ENCODE measurements at regions of chr1 and their contacts with region 1.

Region 1: GRCh38 chr1:111203681-111204200 is 3.3 kb upstream of the DENND2D start:
- DNase-seq: peak; percentile 80
- ATAC-seq: peak; percentile 59
- H3K4me3 Mint-ChIP-seq: peak overlapping the region; percentile 89
- H3K27ac Mint-ChIP-seq: peak overlapping the region; percentile 93
- H3K4me1 Mint-ChIP-seq: peaks cover 85% of the 10 kb centered on the region
- H3K27me3 Mint-ChIP-seq: no peaks in the 10 kb centered on the region
- CTCF ChIP-seq: no peak

Region 2: DNA sequence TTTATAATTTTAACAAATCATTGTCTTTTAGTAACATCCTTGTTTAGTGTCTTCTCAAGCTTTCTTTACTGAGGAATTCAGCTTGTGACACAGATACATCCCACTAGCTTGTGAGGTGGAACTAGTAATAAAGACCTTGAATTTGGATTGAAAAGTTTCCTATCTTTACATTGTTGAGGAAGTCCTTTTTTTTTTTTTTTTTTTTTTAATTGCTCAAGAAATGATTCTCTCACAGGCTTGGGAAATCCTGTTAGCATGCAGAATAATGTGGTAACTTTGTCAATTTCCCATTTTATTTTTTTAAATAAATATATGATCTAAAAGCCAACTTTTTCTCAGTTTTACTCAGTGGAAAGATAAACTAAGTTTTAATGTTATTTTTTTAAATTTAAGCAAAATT is 19.1 kb before region 1 on chr1:
- CTCF ChIA-PET with region 1: no interaction called
- POLR2A ChIA-PET with region 1: interaction called, 6 read pairs
- intact Hi-C with region 1: loop called (anchors 2 kb)
- DNase-seq: no peak
- ATAC-seq: no peak
- H3K4me3 Mint-ChIP-seq: no peak overlapping the region
- H3K27ac Mint-ChIP-seq: no peak overlapping the region
- H3K4me1 Mint-ChIP-seq: peaks cover 43% of the 10 kb centered on the region
- H3K27me3 Mint-ChIP-seq: no peaks in the 10 kb centered on the region
- CTCF ChIP-seq: no peak

Region 3: DNA sequence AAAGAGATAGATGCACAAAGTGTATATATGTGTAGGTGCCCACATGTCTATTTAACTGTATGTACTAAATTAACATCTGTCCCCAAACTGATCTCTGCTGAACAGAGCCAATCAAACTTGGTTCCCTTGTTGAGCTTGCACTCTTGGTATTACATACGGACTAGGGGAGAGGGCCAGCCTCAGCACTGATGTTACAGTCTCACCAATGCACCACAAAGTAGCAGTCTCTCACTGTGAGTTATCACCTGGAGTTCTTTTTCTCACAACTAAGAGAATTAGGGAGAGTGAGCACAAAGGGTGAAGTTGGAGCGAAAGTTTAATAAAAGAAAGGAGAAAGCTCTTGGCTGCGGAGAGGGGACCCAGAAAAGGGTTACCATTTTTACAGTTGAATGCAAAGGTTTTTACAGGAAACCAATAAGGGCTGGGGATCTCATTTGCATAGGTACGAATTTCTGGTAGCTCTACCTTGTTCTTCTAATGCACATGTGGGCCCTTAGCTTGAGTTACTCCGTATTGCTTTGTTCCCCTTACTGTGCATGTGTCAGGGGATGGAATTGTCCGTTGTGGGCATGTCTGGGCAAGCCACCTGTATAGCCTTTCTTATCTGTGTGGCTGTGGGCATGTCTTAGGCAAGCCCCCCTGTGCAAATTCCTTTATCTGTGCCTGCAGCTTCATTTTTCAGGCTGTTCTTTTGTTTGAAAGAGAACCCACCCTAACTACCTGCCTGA is 10.5 kb after region 1 on chr1:
- CTCF ChIA-PET with region 1: interaction called, 7 read pairs
- POLR2A ChIA-PET with region 1: interaction called, 258 read pairs
- intact Hi-C with region 1: loop called (anchors 1 kb)
- DNase-seq: no peak
- ATAC-seq: no peak
- H3K4me3 Mint-ChIP-seq: peak overlapping the region; percentile 42
- H3K27ac Mint-ChIP-seq: peak overlapping the region; percentile 95
- H3K4me1 Mint-ChIP-seq: peaks cover 76% of the 10 kb centered on the region
- H3K27me3 Mint-ChIP-seq: no peaks in the 10 kb centered on the region
- CTCF ChIP-seq: no peak